ENCODE measurements at regions of chr11 and their contacts with region 1.

Region 1: GRCh38 chr11:65888163-65888814 is at the start of gene FIBP:
- DNase-seq: peak; percentile 91
- ATAC-seq: peak; percentile 63
- H3K4me3 Mint-ChIP-seq: peak within 1 kb of the TSS; percentile 98
- H3K27ac Mint-ChIP-seq: peak within 1 kb of the TSS; percentile 95
- H3K4me1 Mint-ChIP-seq: peaks cover 70% of the 10 kb centered on the region
- H3K27me3 Mint-ChIP-seq: no peaks in the 10 kb centered on the region
- CTCF ChIP-seq: peak; percentile 23
- total RNA-seq, gene FIBP: 74.5 and 76.5 TPM in 2 replicates

Region 2: GRCh38 chr11:65779851-65780577 is 108.3 kb before region 1 on chr11:
- CTCF ChIA-PET with region 1: interaction called, 11 read pairs
- POLR2A ChIA-PET with region 1: interaction called, 6 read pairs
- intact Hi-C with region 1: loop called (anchors 2 kb)
- DNase-seq: peak; percentile 78
- ATAC-seq: peak; percentile 63
- H3K4me3 Mint-ChIP-seq: peak overlapping the region; percentile 86
- H3K27ac Mint-ChIP-seq: peak overlapping the region; percentile 59
- H3K4me1 Mint-ChIP-seq: peaks cover 13% of the 10 kb centered on the region
- H3K27me3 Mint-ChIP-seq: no peaks in the 10 kb centered on the region
- CTCF ChIP-seq: no peak

Region 3: GRCh38 chr11:65919146-65920033 is 31.1 kb after region 1 on chr11 and contains the start of gene DRAP1:
- CTCF ChIA-PET with region 1: interaction called, 6 read pairs
- POLR2A ChIA-PET with region 1: interaction called, 55 read pairs
- intact Hi-C with region 1: loop called (anchors 1 kb)
- DNase-seq: peak; percentile 95
- ATAC-seq: peak; percentile 87
- H3K4me3 Mint-ChIP-seq: peak within 1 kb of the TSS; percentile 93
- H3K27ac Mint-ChIP-seq: peak within 1 kb of the TSS; percentile 81
- H3K4me1 Mint-ChIP-seq: peaks cover 53% of the 10 kb centered on the region
- H3K27me3 Mint-ChIP-seq: no peaks in the 10 kb centered on the region
- CTCF ChIP-seq: no peak
- total RNA-seq, gene DRAP1: 64.7 and 75.8 TPM in 2 replicates

Region 4: GRCh38 chr11:65983589-65983987 is 95.3 kb after region 1 on chr11:
- CTCF ChIA-PET with region 1: interaction called, 67 read pairs
- POLR2A ChIA-PET with region 1: interaction called, 16 read pairs
- intact Hi-C with region 1: no loop called
- DNase-seq: no peak
- ATAC-seq: no peak
- H3K4me3 Mint-ChIP-seq: no peak overlapping the region
- H3K27ac Mint-ChIP-seq: no peak overlapping the region
- H3K4me1 Mint-ChIP-seq: no peaks in the 10 kb centered on the region
- H3K27me3 Mint-ChIP-seq: no peaks in the 10 kb centered on the region
- CTCF ChIP-seq: no peak

Region 5: GRCh38 chr11:66051766-66052663 is 163.7 kb after region 1 on chr11 and contains the start of gene SF3B2:
- CTCF ChIA-PET with region 1: interaction called, 3 read pairs
- POLR2A ChIA-PET with region 1: interaction called, 10 read pairs
- intact Hi-C with region 1: no loop called
- DNase-seq: peak; percentile 91
- ATAC-seq: peak; percentile 97
- H3K4me3 Mint-ChIP-seq: peak within 1 kb of the TSS; percentile 99
- H3K27ac Mint-ChIP-seq: peak within 1 kb of the TSS; percentile 96
- H3K4me1 Mint-ChIP-seq: peaks cover 27% of the 10 kb centered on the region
- H3K27me3 Mint-ChIP-seq: peaks cover 8% of the 10 kb centered on the region
- CTCF ChIP-seq: no peak
- total RNA-seq, gene SF3B2: 198 and 219 TPM in 2 replicates

Region 6: GRCh38 chr11:66268283-66268951 is 380.1 kb after region 1 on chr11 and contains the start of gene RAB1B:
- CTCF ChIA-PET with region 1: no interaction called
- POLR2A ChIA-PET with region 1: interaction called, 8 read pairs
- intact Hi-C with region 1: loop called (anchors 2 kb)
- DNase-seq: peak; percentile 98
- ATAC-seq: peak; percentile 76
- H3K4me3 Mint-ChIP-seq: peak within 1 kb of the TSS; percentile 90
- H3K27ac Mint-ChIP-seq: peak within 1 kb of the TSS; percentile 97
- H3K4me1 Mint-ChIP-seq: peaks cover 32% of the 10 kb centered on the region
- H3K27me3 Mint-ChIP-seq: no peaks in the 10 kb centered on the region
- CTCF ChIP-seq: no peak
- total RNA-seq, gene RAB1B: 115 and 118 TPM in 2 replicates

Region 7: GRCh38 chr11:66294626-66295620 is 406.6 kb after region 1 on chr11:
- CTCF ChIA-PET with region 1: no interaction called
- POLR2A ChIA-PET with region 1: no interaction called
- intact Hi-C with region 1: no loop called
- DNase-seq: no peak
- ATAC-seq: no peak
- H3K4me3 Mint-ChIP-seq: no peak overlapping the region
- H3K27ac Mint-ChIP-seq: no peak overlapping the region
- H3K4me1 Mint-ChIP-seq: peaks cover 13% of the 10 kb centered on the region
- H3K27me3 Mint-ChIP-seq: peaks cover 23% of the 10 kb centered on the region
- CTCF ChIP-seq: no peak